ENCODE measurements at regions of chr2 and their contacts with region 1.

Region 1: DNA sequence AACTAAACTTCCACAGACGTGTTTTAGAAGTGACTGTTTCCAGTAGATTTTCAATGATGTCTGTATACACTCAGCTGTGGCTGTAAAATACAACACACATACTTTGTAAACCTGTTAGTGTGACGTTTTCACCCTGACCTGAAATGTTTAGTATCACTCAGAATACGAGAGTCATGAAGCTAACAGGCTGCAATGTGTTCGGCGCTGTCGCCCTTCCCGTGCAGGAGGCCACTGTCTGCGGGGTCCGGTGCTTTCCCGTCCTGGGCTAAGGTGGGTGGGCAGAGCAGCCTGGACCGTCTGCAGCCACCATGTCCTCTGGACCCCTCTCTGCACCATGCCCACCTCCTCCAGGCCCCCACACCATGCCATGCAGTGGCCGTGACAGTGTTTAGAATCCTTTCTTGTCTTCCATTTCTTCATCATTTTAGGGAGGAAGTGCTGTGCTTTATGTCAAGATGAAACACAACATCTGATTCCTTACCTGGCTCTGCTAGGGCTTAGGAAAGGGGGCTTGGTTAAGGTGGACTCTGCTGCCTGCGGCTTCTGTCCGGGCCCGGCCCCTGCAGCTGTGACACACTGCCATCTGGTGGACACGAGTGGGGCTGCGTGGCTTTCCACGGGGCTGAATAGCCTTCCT is 53.8 kb upstream of the RBM44 start:
- DNase-seq: peak; percentile 69 to 96
- H3K4me3 ChIP-seq: no peak overlapping the region
- CTCF ChIP-seq: peak in 1 of 3 donors; percentile 72
- POLR2A ChIP-seq: no peak

Region 2: DNA sequence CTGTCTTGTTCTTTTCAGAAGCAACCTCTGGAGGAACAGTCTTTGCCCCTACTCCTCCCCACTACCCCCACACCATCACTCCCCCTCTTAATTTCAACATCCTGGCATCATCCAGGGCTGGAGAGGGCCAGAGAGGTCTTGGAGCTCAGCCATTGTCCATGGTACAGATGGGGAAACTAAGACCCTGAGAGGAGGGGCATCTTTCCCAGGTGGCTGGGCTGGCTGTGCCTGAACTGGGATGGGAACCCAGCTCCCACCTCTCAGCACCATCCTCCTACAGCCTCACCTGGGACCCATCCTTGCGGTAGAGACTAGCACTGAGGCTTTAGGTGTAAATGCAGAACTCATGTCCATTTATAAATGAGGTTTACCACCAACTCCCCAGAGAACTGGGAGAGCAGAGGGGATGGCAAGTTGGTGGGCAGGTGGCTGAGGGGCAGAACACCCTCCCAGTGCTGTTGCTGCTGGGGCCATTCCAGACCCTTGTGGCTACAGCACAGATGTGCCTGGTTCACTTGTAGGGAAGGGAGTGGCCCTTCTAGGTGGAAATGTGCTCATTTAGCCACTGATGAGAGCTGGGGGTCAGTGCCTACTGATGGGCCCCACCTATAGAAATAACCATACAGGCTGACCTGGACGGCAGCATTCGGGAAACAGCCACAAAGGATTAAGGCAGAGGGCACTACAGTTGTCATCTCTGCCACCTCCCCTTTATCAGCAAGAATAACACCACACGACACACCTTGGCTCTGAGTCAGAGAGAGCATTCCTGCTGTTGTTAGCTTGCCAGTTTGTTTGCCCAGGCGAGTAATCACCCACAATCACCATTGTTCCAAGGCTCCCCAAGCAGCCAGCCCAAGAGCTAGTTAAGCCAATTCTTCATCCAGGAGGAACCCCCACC is 255.6 kb before region 1 on chr2:
- intact Hi-C with region 1: no loop called
- DNase-seq: no peak
- H3K4me3 ChIP-seq: no peak overlapping the region
- CTCF ChIP-seq: no peak
- POLR2A ChIP-seq: no peak

Region 3: DNA sequence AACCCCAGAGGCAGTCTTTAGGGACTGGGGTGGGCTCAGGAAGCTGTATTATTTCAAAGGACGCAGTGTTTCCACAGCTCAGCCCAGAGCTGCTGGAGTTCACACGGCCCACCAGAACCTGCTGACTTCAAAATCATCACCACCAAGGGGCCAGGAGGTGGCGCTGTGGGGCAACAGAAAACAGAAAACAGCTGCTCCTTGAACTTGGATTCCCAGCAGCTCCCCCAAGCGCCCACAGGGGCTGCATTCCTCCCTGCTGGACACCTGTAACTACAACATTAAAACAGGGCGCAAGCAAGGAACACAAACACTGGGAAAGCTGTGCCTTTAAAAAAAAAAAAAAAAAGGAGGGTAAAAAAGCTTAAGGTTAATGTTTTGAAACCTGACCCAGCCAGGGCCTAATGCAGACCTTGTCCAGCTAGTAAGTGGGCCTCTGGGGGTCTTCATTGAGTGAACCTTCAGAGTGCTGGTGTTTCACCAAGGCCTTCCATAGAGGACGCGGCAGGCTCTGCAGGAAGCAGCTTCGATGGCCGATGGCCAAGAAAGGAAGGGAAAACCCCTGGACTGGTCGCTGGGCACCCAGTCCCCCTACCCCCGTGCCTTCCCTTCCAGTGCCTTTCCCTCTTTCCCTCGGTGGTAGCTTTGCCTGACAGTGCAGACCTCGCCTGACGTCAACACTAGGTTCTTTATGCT is 231.8 kb before region 1 on chr2:
- intact Hi-C with region 1: loop called (anchors 10 kb)
- DNase-seq: peak; percentile 84 to 96
- H3K4me3 ChIP-seq: no peak overlapping the region
- CTCF ChIP-seq: no peak
- POLR2A ChIP-seq: no peak

Region 4: DNA sequence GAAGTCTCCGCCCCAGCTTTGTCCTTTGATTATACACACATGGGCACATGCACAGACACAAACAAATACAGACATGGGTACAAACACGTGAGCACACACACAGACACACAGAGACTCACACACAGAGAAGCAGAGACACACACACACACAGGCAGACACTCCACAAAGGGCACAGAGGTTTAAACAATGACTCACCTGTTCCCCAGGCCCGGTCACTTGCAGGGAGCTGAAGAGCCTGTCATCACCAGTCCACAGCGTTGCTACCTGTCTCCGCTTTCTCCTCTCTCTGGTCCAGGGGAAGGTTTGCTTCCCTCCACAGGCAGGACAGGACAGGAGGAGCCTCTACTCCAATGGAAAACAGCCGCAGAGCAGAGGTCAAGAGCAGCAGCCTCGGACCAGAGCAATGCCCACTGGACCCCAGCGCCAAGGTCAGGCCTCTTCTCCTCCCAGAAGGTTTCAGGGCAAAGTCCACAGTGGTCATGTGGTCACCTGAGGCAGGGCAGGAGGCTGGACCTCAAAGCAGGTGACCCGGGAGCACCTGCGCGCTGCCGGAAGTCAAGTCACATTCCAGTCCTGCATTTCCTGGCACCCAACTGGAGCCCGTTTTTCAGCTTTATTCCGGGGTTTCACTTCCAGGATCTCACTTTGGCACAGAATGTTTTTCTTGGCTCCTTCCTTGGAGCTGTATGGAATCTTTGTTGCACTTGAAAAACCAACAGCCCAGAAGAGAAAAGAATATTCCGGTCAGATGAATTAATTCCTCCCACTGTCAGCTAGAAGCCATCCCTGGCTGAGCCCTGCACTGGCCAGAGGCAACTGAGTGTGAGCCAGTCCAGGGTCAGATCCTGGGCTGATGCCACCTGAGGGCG is 154.2 kb before region 1 on chr2 and contains the start of gene RAB17:
- intact Hi-C with region 1: loop called (anchors 10 kb)
- DNase-seq: no peak
- H3K4me3 ChIP-seq: no peak within 1 kb of the TSS
- CTCF ChIP-seq: peak in 1 of 3 donors; percentile 61
- POLR2A ChIP-seq: no peak
- total RNA-seq, gene RAB17: 1.7 to 6.3 (median 2.8) TPM

Region 5: DNA sequence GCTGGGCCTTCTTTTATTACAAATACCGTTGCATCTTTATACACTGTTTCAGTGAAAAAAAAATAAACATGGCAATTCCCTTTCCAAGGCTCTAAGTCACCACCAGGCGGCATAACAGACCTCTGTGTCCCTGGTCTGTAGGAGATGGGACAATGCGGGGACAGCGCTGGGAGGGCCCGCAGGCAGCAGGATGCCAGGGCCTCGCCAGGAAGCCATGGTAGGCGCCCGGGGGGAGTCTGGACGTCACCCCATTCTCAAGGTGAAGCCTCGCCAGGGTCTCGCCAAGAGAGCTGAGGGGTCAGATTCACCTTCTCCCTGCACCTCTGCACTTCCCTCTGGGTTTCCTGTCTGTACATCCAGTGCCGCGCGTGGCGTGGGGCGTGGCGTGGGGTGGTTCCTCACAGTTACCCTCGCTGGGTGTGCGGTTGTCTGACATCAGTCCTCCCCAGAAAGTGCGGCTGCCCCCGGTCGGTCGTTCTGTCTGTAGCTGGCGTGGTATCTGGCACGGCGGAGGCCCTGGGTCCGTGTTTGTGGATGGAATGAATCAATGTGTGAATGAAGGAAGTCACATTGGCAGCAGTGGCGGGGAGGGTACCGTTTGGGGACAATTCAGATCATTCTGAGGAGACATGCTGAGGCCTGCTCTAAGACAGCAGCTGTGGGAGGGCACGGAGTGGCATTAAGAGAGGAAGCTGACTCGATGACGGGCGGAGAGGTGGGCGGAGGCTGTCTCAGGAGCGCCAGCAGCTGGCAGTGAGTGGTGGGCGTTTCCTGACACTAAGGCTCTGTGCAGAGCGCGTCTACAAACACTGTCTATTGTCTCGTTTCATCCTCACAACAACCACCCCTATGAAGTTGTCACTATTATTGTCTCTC is 71.4 kb before region 1 on chr2:
- intact Hi-C with region 1: loop called (anchors 2 kb)
- DNase-seq: peak; percentile 74 to 95
- H3K4me3 ChIP-seq: no peak overlapping the region
- CTCF ChIP-seq: peak in 1 of 3 donors; percentile 56
- POLR2A ChIP-seq: no peak

Measured in lower leg skin (tissue), 4 donors.